Naive thymus-derived CD4-positive, alpha-beta T cell (primary cell): ENCODE measurements at regions of chr14 and their contacts with region 1.

Region 1: DNA sequence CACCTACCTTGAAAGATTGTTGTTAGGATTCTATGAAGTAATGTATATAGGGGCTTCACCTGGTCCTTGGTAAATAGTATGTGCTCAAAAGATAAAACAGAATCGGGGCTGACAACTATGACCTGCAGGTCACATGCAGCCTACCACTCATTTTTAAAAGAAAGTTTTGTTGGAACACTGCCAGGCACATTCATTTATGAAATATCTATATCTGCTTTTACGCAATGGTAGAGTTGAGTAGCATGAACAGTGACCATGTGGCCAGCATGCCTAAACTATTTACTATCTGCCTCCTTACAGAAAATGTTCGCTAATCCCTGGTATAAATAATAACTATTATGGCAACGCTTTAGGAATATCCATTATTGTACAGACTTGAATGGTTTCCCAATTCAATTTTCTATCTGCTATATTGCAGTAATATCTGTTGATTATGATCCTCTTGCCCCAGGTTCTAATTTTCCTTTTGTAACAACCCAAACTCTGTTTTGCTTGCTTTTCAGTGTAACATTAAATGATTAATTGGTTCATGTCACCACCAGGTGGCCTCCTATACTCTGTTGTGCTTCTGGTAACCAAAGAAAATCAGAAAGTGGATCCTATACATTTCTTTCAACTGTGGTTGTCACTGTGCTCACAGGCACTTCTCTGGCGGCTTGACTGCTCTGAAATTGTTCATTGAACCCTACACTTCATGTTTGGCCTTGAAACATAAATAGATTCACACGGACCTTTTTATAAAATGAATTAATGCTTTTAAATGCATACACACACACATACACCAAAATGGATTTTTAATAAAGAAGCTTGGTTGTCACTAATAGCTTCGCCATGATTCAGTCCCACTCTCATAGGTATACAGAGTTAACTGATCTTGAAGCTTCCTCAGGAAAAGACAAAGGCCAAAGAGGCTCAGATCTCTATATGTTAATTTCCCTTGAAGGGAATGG is 227.7 kb upstream of the NPAS3 start:
- DNase-seq: no peak
- ATAC-seq: no peak
- H3K4me3 ChIP-seq: no peak overlapping the region
- H3K4me3 Mint-ChIP-seq: no peak overlapping the region
- H3K27ac ChIP-seq: no peak overlapping the region
- H3K27ac Mint-ChIP-seq: no peak overlapping the region
- H3K4me1 ChIP-seq: no peaks in the 10 kb centered on the region
- H3K4me1 Mint-ChIP-seq: peaks cover 0 to 2% (median 0%) of the 10 kb centered on the region in 7 donors
- H3K27me3 ChIP-seq: no peaks in the 10 kb centered on the region
- H3K27me3 Mint-ChIP-seq: peaks cover 0 to 6% (median 0%) of the 10 kb centered on the region in 5 donors

Region 2: GRCh38 chr14:32430326-32430725 is 280.7 kb before region 1 on chr14:
- CTCF ChIA-PET with region 1: no interaction called
- POLR2A ChIA-PET with region 1: no interaction called
- intact Hi-C with region 1: no loop called
- DNase-seq: no peak
- ATAC-seq: no peak
- H3K4me3 ChIP-seq: no peak overlapping the region
- H3K4me3 Mint-ChIP-seq: no peak overlapping the region
- H3K27ac ChIP-seq: no peak overlapping the region
- H3K27ac Mint-ChIP-seq: no peak overlapping the region
- H3K4me1 ChIP-seq: no peaks in the 10 kb centered on the region
- H3K4me1 Mint-ChIP-seq: peaks cover 0 to 1% (median 0%) of the 10 kb centered on the region in 7 donors
- H3K27me3 ChIP-seq: no peaks in the 10 kb centered on the region
- H3K27me3 Mint-ChIP-seq: peaks cover 0 to 4% (median 0%) of the 10 kb centered on the region in 5 donors

Region 3: GRCh38 chr14:32524609-32525375 is 186.2 kb before region 1 on chr14:
- CTCF ChIA-PET with region 1: no interaction called
- POLR2A ChIA-PET with region 1: no interaction called
- intact Hi-C with region 1: no loop called
- DNase-seq: no peak
- ATAC-seq: no peak
- H3K4me3 ChIP-seq: no peak overlapping the region
- H3K4me3 Mint-ChIP-seq: no peak overlapping the region
- H3K27ac ChIP-seq: no peak overlapping the region
- H3K27ac Mint-ChIP-seq: no peak overlapping the region
- H3K4me1 ChIP-seq: no peaks in the 10 kb centered on the region
- H3K4me1 Mint-ChIP-seq: no peaks in the 10 kb centered on the region
- H3K27me3 ChIP-seq: no peaks in the 10 kb centered on the region
- H3K27me3 Mint-ChIP-seq: peaks cover 0 to 8% (median 0%) of the 10 kb centered on the region in 5 donors

Region 4: GRCh38 chr14:33792720-33793368 is 1081.8 kb after region 1 on chr14:
- CTCF ChIA-PET with region 1: interaction called, 3 read pairs
- POLR2A ChIA-PET with region 1: no interaction called
- intact Hi-C with region 1: loop called in 1 of 2 experiments (anchors 2 kb)
- DNase-seq: peak; percentile 10 to 72 (median 36)
- ATAC-seq: peak; percentile 72
- H3K4me3 ChIP-seq: no peak overlapping the region
- H3K4me3 Mint-ChIP-seq: peak overlapping the region; percentile 42 to 72 (median 67)
- H3K27ac ChIP-seq: no peak overlapping the region
- H3K27ac Mint-ChIP-seq: no peak overlapping the region
- H3K4me1 ChIP-seq: no peaks in the 10 kb centered on the region
- H3K4me1 Mint-ChIP-seq: peaks cover 10 to 21% (median 16%) of the 10 kb centered on the region in 7 donors
- H3K27me3 ChIP-seq: no peaks in the 10 kb centered on the region
- H3K27me3 Mint-ChIP-seq: peaks cover 36 to 56% (median 42%) of the 10 kb centered on the region in 5 donors